Left lung (tissue), 14 donors: ENCODE measurements at regions of chr2 and their contacts with region 1.

Region 1: GRCh38 chr2:120693121-120693520 is 42.5 kb upstream of the GLI2 start:
- DNase-seq: no peak
- ATAC-seq: no peak
- H3K4me3 ChIP-seq: no peak overlapping the region
- H3K27ac ChIP-seq: no peak overlapping the region
- H3K4me1 ChIP-seq: peaks cover 0 to 4% of the 10 kb centered on the region in 2 donors
- H3K27me3 ChIP-seq: peaks cover 15 to 69% of the 10 kb centered on the region in 2 donors
- CTCF ChIP-seq: no peak

Region 2: GRCh38 chr2:120445428-120446136 is 247.5 kb before region 1 on chr2:
- intact Hi-C with region 1: no loop called
- DNase-seq: no peak
- ATAC-seq: no peak
- H3K4me3 ChIP-seq: no peak overlapping the region
- H3K27ac ChIP-seq: no peak overlapping the region
- H3K4me1 ChIP-seq: peaks cover 3 to 11% of the 10 kb centered on the region in 2 donors
- H3K27me3 ChIP-seq: peaks cover 18 to 47% of the 10 kb centered on the region in 2 donors
- CTCF ChIP-seq: no peak

Region 3: DNA sequence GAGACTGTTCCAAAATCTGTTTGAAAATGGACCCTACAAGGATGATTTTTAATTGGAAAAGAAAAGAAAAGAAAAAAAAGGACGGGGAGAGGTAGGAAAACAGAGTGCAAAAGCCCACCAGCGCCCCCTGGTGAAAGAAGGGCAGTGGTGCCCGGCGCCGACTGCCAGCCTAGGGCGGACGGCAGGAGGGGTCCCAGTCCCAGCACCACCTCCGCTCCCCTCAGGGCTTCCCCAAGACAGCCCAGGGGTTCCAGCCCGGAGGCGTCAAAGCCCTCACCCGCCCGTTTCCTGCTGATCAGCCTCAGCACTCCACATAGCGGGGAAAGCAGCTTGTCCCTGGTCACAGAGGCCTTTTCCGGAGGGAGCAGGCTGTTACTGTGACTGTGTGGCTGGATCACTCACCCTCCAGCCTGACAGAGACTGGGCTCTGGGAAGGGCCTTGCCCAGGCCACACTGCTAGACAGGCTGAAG is 377.9 kb after region 1 on chr2:
- intact Hi-C with region 1: loop called (anchors 5 to 10 kb)
- DNase-seq: peak; percentile 57 to 88 (median 71)
- ATAC-seq: peak; percentile 78
- H3K4me3 ChIP-seq: no peak overlapping the region
- H3K27ac ChIP-seq: no peak overlapping the region
- H3K4me1 ChIP-seq: no peaks in the 10 kb centered on the region
- H3K27me3 ChIP-seq: peaks cover 2 to 73% of the 10 kb centered on the region in 2 donors
- CTCF ChIP-seq: peak; percentile 87 to 97

Region 4: GRCh38 chr2:121076885-121077549 is 383.9 kb after region 1 on chr2:
- intact Hi-C with region 1: loop called (anchors 5 to 10 kb)
- DNase-seq: peak in 3 of 4 donors; percentile 39 to 95 (median 68)
- ATAC-seq: peak; percentile 85
- H3K4me3 ChIP-seq: no peak overlapping the region
- H3K27ac ChIP-seq: no peak overlapping the region
- H3K4me1 ChIP-seq: no peaks in the 10 kb centered on the region
- H3K27me3 ChIP-seq: peaks cover 8 to 67% of the 10 kb centered on the region in 2 donors
- CTCF ChIP-seq: peak; percentile 72 to 91